AG04449 (cell line): ENCODE measurements at regions of chr1 and their contacts with region 1.

Region 1: GRCh38 chr1:111755331-111756123 is at the start of gene DDX20:
- DNase-seq: peak; percentile 95
- H3K4me3 ChIP-seq: peak within 1 kb of the TSS; percentile 91
- CTCF ChIP-seq: peak; percentile 85

Region 2: DNA sequence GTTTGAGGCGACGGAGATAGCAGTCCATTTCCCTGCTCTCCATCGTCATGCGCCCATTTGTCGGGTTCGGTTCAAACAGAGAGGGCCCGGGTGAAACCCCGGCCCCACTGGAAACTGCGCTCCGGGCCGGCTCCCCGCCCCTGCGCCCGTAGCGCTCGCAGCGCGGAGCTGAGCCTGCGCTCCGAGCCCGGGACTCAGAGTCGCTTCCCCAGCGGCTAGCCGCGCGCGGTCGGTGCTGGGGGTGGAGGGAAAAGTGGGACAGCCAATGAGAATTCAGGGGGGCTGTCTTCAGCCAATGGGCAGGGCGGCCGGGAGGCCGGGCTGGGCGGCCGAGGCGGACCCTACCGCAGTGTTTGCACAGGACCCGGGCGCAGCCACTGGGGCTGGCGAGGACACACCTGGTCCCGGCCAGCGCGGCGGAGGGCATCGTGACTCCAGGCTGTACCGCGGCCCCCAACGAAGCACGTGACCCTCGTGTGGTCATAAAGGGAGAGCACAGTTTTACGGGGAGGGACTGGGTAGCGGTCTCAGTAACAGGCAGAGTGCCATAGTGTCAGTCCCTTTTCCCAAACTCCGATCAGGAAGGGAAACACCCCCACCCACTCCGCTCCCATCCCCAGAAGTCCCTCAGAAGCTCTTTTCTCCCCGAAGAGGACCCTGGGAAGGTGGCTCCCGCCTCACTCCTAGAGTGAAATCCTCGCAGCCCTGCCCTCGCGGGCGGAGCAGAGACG is 16.2 kb before region 1 on chr1 and contains the start of gene INKA2:
- CTCF ChIA-PET with region 1: interaction called, 115 read pairs
- POLR2A ChIA-PET with region 1: interaction called, 3 read pairs
- DNase-seq: no peak
- H3K4me3 ChIP-seq: peak within 1 kb of the TSS; percentile 54
- CTCF ChIP-seq: no peak